Esophagus squamous epithelium (tissue), 5 donors: ENCODE measurements at regions of chr7 and their contacts with region 1.

Region 1: GRCh38 chr7:151123822-151124464 is 37.7 kb downstream of the AGAP3 start:
- DNase-seq: peak; percentile 17
- H3K4me3 ChIP-seq: no peak overlapping the region
- H3K27ac ChIP-seq: no peak overlapping the region
- H3K4me1 ChIP-seq: peaks cover 18 to 38% (median 20%) of the 10 kb centered on the region in 3 donors
- H3K27me3 ChIP-seq: no peaks in the 10 kb centered on the region
- CTCF ChIP-seq: peak; percentile 90 to 99 (median 96)
- POLR2A ChIP-seq: no peak

Region 2: GRCh38 chr7:151051108-151051507 is 72.8 kb before region 1 on chr7:
- intact Hi-C with region 1: no loop called
- DNase-seq: no peak
- H3K4me3 ChIP-seq: peak overlapping the region in 2 of 4 donors; percentile 5 to 41
- H3K27ac ChIP-seq: no peak overlapping the region
- H3K4me1 ChIP-seq: peaks cover 10 to 24% (median 11%) of the 10 kb centered on the region in 3 donors
- H3K27me3 ChIP-seq: peaks cover 0 to 19% (median 0%) of the 10 kb centered on the region in 4 donors
- CTCF ChIP-seq: no peak
- POLR2A ChIP-seq: no peak

Region 3: GRCh38 chr7:151161757-151162156 is 37.8 kb after region 1 on chr7:
- intact Hi-C with region 1: no loop called
- DNase-seq: no peak
- H3K4me3 ChIP-seq: no peak overlapping the region
- H3K27ac ChIP-seq: no peak overlapping the region
- H3K4me1 ChIP-seq: peaks cover 3 to 4% (median 3%) of the 10 kb centered on the region in 3 donors
- H3K27me3 ChIP-seq: peaks cover 4 to 83% (median 8%) of the 10 kb centered on the region in 4 donors
- CTCF ChIP-seq: no peak
- POLR2A ChIP-seq: no peak

Region 4: GRCh38 chr7:151172273-151173141 is 48.6 kb after region 1 on chr7:
- intact Hi-C with region 1: loop called (anchors 5 kb)
- DNase-seq: no peak
- H3K4me3 ChIP-seq: no peak overlapping the region
- H3K27ac ChIP-seq: no peak overlapping the region
- H3K4me1 ChIP-seq: peaks cover 4 to 15% (median 7%) of the 10 kb centered on the region in 3 donors
- H3K27me3 ChIP-seq: peaks cover 0 to 94% (median 1%) of the 10 kb centered on the region in 4 donors
- CTCF ChIP-seq: peak; percentile 100
- POLR2A ChIP-seq: no peak